Activated CD4-positive, alpha-beta T cell treated with anti-CD3 and anti-CD28 coated beads, Interleukin-2, amount 10 ng/mL, durations not matched to agents 24 days and 14 days (primary cell): ENCODE measurements at regions of chr14 and their contacts with region 1.

Region 1: DNA sequence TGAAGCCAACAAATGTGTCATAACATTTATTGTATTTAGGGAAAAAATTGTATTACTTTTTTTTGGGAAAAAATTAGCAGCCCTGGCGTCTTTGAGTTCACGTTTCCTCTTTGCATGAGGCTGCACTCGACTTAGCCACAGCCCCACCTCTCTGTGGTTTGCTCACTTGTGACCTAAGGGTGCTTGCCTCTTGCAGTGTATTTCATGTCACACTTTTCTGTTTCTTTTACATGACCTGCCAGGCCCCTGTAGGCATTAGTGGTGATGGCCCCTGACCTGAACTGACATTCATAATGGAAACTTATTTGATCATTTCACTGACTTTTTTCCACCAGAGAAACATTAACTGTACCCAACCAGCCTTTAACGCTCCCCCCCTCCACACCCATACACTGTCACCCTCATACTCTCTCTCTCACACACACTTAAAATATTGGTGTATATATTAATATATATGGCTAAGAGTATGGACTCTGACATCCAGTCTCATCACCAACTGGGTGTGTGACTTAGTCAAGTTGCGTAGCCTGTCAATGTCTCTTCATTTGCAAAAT is 122.9 kb downstream of the PRKCH start:
- DNase-seq: peak; percentile 91
- H3K4me3 Mint-ChIP-seq: peak overlapping the region; percentile 70
- H3K27ac Mint-ChIP-seq: peak overlapping the region; percentile 87
- H3K4me1 Mint-ChIP-seq: peaks cover 83% of the 10 kb centered on the region
- H3K27me3 Mint-ChIP-seq: no peaks in the 10 kb centered on the region

Region 2: GRCh38 chr14:60980811-60981632 is 463.3 kb before region 1 on chr14 and contains the starts of genes SLC38A6 and TRMT5:
- intact Hi-C with region 1: loop called (anchors 10 kb)
- DNase-seq: peak; percentile 98
- H3K4me3 Mint-ChIP-seq: no peak within 1 kb of the TSS
- H3K27ac Mint-ChIP-seq: no peak within 1 kb of the TSS
- H3K4me1 Mint-ChIP-seq: peaks cover 21% of the 10 kb centered on the region
- H3K27me3 Mint-ChIP-seq: no peaks in the 10 kb centered on the region
- total RNA-seq, gene SLC38A6: 4.7 and 5.9 TPM in 2 replicates
- total RNA-seq, gene TRMT5: 16.1 and 18.0 TPM in 2 replicates

Region 3: DNA sequence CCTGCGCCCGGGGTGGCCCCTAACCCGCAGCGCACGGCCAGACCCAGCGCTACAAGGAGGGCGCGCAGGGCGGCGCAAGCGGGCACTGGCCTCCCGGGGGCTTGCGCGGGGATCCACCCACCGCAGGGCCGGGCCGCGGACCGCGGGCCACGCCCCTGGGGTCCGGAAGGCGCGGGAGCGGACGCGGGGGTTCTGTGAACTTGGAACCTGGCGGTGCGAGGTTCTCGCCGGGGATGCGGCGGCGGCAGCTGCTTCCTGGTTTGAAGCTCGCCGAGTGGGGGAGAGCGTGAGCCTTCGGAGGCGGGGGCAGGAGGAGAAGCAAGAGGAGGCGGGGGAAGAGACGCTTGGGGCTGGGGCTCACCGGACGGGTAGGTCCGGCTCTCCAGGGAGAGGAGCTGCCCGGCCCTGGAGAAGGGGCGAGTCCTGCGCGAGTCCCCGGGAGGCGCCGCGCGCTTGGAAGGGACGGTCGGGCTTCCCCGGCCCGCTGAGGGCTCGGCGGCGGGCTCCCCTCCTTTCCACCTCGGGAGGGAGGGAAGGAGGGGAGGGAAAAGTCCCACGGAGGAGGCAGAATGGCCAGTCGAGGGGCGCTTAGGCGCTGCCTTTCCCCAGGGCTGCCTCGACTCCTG is 122.8 kb before region 1 on chr14 and contains the start of gene PRKCH:
- intact Hi-C with region 1: no loop called
- DNase-seq: peak; percentile 96
- H3K4me3 Mint-ChIP-seq: peak within 1 kb of the TSS; percentile 93
- H3K27ac Mint-ChIP-seq: peak within 1 kb of the TSS; percentile 91
- H3K4me1 Mint-ChIP-seq: peaks cover 21% of the 10 kb centered on the region
- H3K27me3 Mint-ChIP-seq: no peaks in the 10 kb centered on the region
- total RNA-seq, gene PRKCH: 108 and 118 TPM in 2 replicates

Region 4: GRCh38 chr14:61342486-61342885 is 101.8 kb before region 1 on chr14:
- intact Hi-C with region 1: loop called (anchors 2 kb)
- DNase-seq: peak; percentile 96
- H3K4me3 Mint-ChIP-seq: peak overlapping the region; percentile 86
- H3K27ac Mint-ChIP-seq: peak overlapping the region; percentile 95
- H3K4me1 Mint-ChIP-seq: peaks cover 80% of the 10 kb centered on the region
- H3K27me3 Mint-ChIP-seq: no peaks in the 10 kb centered on the region

Region 5: GRCh38 chr14:61512026-61512834 is 67.9 kb after region 1 on chr14:
- intact Hi-C with region 1: no loop called
- DNase-seq: no peak
- H3K4me3 Mint-ChIP-seq: peak overlapping the region; percentile 65
- H3K27ac Mint-ChIP-seq: peak overlapping the region; percentile 83
- H3K4me1 Mint-ChIP-seq: peaks cover 73% of the 10 kb centered on the region
- H3K27me3 Mint-ChIP-seq: no peaks in the 10 kb centered on the region